Heart right ventricle (tissue), 16 donors: ENCODE measurements at regions of chr3 and their contacts with region 1.

Region 1: DNA sequence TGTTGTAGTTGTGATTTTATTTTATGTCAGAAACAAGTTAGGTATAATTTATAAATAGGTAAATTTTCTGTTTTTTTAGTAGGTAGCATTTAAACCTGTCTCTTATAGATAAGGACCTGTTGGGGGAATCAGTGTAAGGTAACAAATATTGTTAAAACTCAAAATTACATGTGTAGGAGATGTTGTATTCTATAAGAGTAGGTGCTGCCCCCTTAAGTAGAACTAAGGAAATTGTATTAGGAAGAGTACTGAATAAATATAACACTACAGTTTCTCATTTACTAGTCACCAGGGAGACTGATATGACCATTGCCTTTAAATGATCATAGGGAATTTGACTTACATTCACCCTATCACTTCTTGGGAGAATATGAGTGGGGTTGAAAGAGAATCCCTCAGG is 31.2 kb downstream of the SLC25A36 start:
- DNase-seq: no peak
- ATAC-seq: peak in 2 of 8 donors; percentile 33 to 53
- H3K4me3 ChIP-seq: no peak overlapping the region
- H3K27ac ChIP-seq: no peak overlapping the region
- H3K4me1 ChIP-seq: peaks cover 0 to 10% (median 0%) of the 10 kb centered on the region in 9 donors
- H3K27me3 ChIP-seq: no peaks in the 10 kb centered on the region
- CTCF ChIP-seq: peak in 7 of 9 donors; percentile 12 to 54 (median 43)

Region 2: DNA sequence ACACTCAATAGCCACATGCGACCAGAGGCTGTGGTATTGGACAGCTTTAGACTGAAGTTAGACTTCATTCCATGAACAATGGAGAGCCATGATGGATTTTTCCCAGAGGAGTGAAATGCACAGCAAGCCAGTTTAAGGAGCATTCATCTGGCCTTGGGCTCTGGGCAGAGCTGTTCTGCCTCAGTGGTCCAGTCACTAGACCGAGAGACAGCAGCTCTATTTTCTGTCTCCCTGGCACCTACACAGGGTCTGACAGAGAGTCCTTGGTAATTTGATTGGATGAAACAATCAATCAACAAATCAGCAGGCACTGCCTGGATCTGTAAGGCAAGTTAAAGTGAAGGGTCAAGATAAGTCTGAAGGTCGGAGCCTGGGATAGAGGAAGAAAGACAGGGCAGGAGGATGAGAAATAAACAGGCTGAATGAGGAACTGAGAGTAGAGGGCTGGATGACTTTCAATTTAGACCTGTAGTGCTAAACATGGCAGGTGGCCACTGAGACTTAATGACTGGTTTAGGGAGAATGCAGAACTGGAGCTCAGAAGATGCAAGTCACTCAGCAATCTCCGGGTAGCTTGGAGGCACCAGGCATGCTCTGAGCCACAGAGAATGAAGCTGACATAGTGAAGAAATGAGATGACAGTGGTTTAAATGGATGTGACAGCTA is 129.7 kb before region 1 on chr3:
- intact Hi-C with region 1: no loop called
- DNase-seq: no peak
- ATAC-seq: no peak
- H3K4me3 ChIP-seq: no peak overlapping the region
- H3K27ac ChIP-seq: no peak overlapping the region
- H3K4me1 ChIP-seq: peaks cover 0 to 10% (median 0%) of the 10 kb centered on the region in 9 donors
- H3K27me3 ChIP-seq: peaks cover 0 to 20% (median 3%) of the 10 kb centered on the region in 7 donors
- CTCF ChIP-seq: no peak

Region 3: GRCh38 chr3:140898340-140899180 is 74.3 kb before region 1 on chr3:
- intact Hi-C with region 1: loop called in 4 of 10 experiments (anchors 2 to 5 kb)
- DNase-seq: no peak
- ATAC-seq: peak in 4 of 8 donors; percentile 23 to 65 (median 44)
- H3K4me3 ChIP-seq: no peak overlapping the region
- H3K27ac ChIP-seq: no peak overlapping the region
- H3K4me1 ChIP-seq: peaks cover 0 to 3% (median 0%) of the 10 kb centered on the region in 9 donors
- H3K27me3 ChIP-seq: peaks cover 0 to 8% (median 0%) of the 10 kb centered on the region in 7 donors
- CTCF ChIP-seq: peak; percentile 17 to 68 (median 55)

Region 4: DNA sequence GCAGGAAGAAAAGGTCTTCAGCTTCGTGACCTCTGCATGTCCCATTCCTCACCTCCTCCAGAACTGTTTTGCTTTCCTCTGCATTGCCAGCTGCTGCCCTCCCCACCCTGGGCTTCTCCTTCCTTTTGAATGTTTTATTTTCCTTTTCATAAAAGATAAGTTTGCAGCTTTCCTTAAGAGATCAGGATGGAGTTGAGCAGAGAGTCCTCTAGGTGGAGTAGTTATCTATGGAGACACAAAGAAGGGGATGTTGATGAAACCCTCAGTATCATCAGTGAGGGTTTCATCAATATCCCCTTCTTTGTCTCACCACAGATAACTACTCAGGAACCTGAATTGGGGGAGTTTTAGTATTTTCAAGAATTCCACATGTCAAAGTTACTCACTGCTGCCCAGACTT is 50.2 kb before region 1 on chr3:
- intact Hi-C with region 1: loop called in 1 of 10 experiments (anchors 5 kb)
- DNase-seq: no peak
- ATAC-seq: no peak
- H3K4me3 ChIP-seq: no peak overlapping the region
- H3K27ac ChIP-seq: no peak overlapping the region
- H3K4me1 ChIP-seq: peaks cover 0 to 22% (median under 1%) of the 10 kb centered on the region in 9 donors
- H3K27me3 ChIP-seq: no peaks in the 10 kb centered on the region
- CTCF ChIP-seq: peak in 8 of 9 donors; percentile 6 to 46 (median 35)